ENCODE measurements at regions of chr11 and their contacts with region 1.

Region 1: GRCh38 chr11:75351791-75352587 is 528 bp upstream of the ARRB1 start:
- DNase-seq: peak; percentile 67 to 86 (median 70)
- ATAC-seq: peak; percentile 29 to 55 (median 52)
- H3K4me3 ChIP-seq: peak overlapping the region; percentile 33 to 92 (median 80)
- H3K27ac ChIP-seq: peak overlapping the region; percentile 39 to 87 (median 85)
- H3K4me1 ChIP-seq: peaks cover 8 to 29% (median 23%) of the 10 kb centered on the region in 3 donors
- H3K27me3 ChIP-seq: no peaks in the 10 kb centered on the region
- CTCF ChIP-seq: no peak

Region 2: DNA sequence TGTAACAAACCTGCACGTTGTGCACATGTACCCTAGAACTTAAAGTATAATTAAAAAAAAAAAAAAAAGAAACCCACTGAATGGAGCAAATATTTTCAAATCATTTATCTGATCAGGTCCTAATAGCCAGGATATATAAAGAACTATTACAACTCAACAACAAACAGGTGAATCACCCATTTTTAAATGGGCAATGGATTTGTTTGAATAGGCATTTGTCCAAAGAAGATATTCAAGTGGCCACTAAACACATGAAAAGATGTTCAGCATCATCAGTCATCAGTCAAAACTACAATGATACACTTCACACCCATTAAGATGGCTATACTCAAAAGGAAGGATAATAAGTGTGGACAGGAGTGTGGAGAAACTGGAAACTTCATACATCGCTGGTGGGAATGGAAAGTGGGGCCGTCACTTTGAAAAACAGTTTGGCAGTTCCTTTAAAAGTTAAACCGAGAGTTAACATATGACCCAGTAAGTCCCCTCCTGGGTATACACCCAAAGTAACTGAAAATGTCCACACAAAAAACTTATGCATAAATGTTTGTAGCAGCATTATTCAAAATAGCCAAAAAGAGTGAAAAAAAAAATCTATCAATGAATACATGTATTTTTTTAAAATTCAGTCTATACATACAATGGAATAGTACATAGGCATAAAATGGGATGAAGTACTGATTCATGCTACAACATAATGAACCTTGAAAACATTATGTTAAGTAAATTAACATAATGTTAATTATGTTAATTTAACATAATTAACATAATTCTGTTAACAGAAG is 53.6 kb before region 1 on chr11:
- intact Hi-C with region 1: loop called in 1 of 3 experiments (anchors 10 kb)
- DNase-seq: no peak
- ATAC-seq: no peak
- H3K4me3 ChIP-seq: no peak overlapping the region
- H3K27ac ChIP-seq: no peak overlapping the region
- H3K4me1 ChIP-seq: peaks cover 10 to 16% (median 16%) of the 10 kb centered on the region in 3 donors
- H3K27me3 ChIP-seq: no peaks in the 10 kb centered on the region
- CTCF ChIP-seq: no peak

Region 3: GRCh38 chr11:76207642-76208401 is 855.8 kb after region 1 on chr11:
- intact Hi-C with region 1: no loop called
- DNase-seq: peak; percentile 67 to 96 (median 84)
- ATAC-seq: peak; percentile 73 to 86 (median 76)
- H3K4me3 ChIP-seq: peak overlapping the region; percentile 45 to 78 (median 64)
- H3K27ac ChIP-seq: peak overlapping the region; percentile 66 to 89 (median 80)
- H3K4me1 ChIP-seq: no peaks in the 10 kb centered on the region
- H3K27me3 ChIP-seq: no peaks in the 10 kb centered on the region
- CTCF ChIP-seq: peak; percentile 91 to 98 (median 96)

Measured in pancreas (tissue), 10 donors.